ENCODE measurements at regions of chr10 and their contacts with region 1.

Region 1: GRCh38 chr10:129963641-129964501 is at the start of gene EBF3:
- DNase-seq: no peak
- ATAC-seq: peak; percentile 89
- H3K4me3 ChIP-seq: peak within 1 kb of the TSS; percentile 54 to 59
- H3K27ac ChIP-seq: no peak within 1 kb of the TSS
- H3K4me1 ChIP-seq: peaks cover 9% of the 10 kb centered on the region
- H3K27me3 ChIP-seq: peaks cover 23% of the 10 kb centered on the region
- CTCF ChIP-seq: no peak
- total RNA-seq, gene EBF3: 0.64 TPM

Region 2: DNA sequence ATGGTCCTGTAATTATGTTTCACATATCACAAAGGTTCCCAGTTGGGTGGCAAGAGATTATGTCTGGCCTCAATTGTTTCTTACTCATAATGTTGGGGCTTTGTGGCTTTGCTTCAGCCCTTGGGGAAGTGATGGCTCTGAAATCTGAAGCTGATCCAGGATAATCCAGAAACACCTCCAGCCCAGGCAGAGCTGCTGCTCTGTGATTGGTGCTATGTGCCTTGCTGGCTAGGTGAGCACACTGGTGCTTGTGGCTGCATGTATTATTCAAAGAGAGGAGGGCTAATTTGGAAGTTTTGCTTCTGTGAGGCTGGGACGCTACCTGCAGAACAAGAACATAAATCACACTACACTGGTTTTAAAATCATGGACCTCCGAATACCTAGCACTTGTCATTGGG is 843.4 kb before region 1 on chr10:
- CTCF ChIA-PET with region 1: no interaction called
- POLR2A ChIA-PET with region 1: interaction called, 10 read pairs
- in situ Hi-C with region 1: no loop called
- intact Hi-C with region 1: no loop called
- DNase-seq: no peak
- ATAC-seq: no peak
- H3K4me3 ChIP-seq: no peak overlapping the region
- H3K27ac ChIP-seq: no peak overlapping the region
- H3K4me1 ChIP-seq: no peaks in the 10 kb centered on the region
- H3K27me3 ChIP-seq: no peaks in the 10 kb centered on the region
- CTCF ChIP-seq: no peak

Region 3: GRCh38 chr10:129466703-129467358 is 497.0 kb before region 1 on chr10 and contains the start of gene MGMT:
- CTCF ChIA-PET with region 1: no interaction called
- POLR2A ChIA-PET with region 1: no interaction called
- in situ Hi-C with region 1: no loop called
- intact Hi-C with region 1: loop called (anchors 10 kb)
- DNase-seq: peak; percentile 5
- ATAC-seq: peak; percentile 97
- H3K4me3 ChIP-seq: peak within 1 kb of the TSS; percentile 76 to 81
- H3K27ac ChIP-seq: peak within 1 kb of the TSS; percentile 89
- H3K4me1 ChIP-seq: peaks cover 6% of the 10 kb centered on the region
- H3K27me3 ChIP-seq: no peaks in the 10 kb centered on the region
- CTCF ChIP-seq: no peak
- total RNA-seq, gene MGMT: 27.3 TPM

Region 4: DNA sequence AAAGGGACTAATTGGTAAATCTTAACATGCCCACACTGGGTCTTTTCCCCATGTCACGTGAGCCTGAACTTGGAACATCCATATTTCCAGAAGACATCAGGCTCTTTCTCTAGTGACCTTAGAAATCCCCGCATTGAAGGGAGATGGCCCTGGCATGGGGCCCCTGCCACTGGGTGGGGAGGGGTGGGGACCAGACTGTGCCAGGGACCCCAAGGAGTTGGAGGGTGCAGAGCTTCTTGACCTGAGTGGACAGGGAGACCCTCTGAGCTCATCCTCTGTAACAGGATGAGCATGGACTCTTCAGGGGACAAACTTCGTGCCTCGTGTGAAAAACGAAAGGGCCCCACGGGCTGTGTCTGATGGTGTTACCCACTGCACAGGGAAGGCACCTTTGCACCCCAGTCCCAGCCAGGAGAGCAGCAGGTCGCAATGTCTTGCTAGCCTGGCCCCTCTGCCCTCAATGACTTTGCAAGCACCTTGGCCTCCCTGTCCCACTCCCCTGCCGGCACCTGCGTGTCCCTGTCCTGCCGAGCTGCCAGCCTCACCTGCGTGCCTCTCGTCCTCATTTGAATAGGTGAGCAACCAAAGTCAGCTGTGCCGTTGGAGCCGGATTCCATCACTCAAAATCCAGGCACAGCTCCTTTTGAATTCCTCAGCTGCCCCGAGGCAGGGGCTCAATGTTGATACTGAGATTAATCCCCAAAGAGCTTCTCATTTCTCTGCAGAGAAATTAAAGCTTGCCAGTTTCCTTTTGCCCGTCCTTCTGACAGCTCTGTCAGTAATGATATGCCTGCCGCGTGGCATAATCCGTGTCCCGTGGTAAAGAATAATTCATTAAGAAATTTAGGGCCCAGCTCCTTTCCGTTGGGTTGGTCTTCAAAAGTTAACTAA is 234.7 kb before region 1 on chr10:
- CTCF ChIA-PET with region 1: no interaction called
- POLR2A ChIA-PET with region 1: no interaction called
- in situ Hi-C with region 1: no loop called
- intact Hi-C with region 1: no loop called
- DNase-seq: no peak
- ATAC-seq: no peak
- H3K4me3 ChIP-seq: no peak overlapping the region
- H3K27ac ChIP-seq: no peak overlapping the region
- H3K4me1 ChIP-seq: no peaks in the 10 kb centered on the region
- H3K27me3 ChIP-seq: no peaks in the 10 kb centered on the region
- CTCF ChIP-seq: no peak

Region 5: GRCh38 chr10:129883626-129884396 is 80.1 kb before region 1 on chr10:
- CTCF ChIA-PET with region 1: interaction called, 12 read pairs
- POLR2A ChIA-PET with region 1: no interaction called
- in situ Hi-C with region 1: no loop called
- intact Hi-C with region 1: loop called (anchors 5 kb)
- DNase-seq: no peak
- ATAC-seq: no peak
- H3K4me3 ChIP-seq: no peak overlapping the region
- H3K27ac ChIP-seq: no peak overlapping the region
- H3K4me1 ChIP-seq: no peaks in the 10 kb centered on the region
- H3K27me3 ChIP-seq: no peaks in the 10 kb centered on the region; the same call in 1 of the 2 replicates
- CTCF ChIP-seq: no peak